ENCODE measurements at regions of chr4 and their contacts with region 1.

Region 1: GRCh38 chr4:140595065-140595464 is 26.3 kb upstream of the UCP1 start:
- DNase-seq: peak; percentile 33
- H3K4me3 ChIP-seq: no peak overlapping the region
- H3K27ac ChIP-seq: no peak overlapping the region
- H3K4me1 ChIP-seq: no peaks in the 10 kb centered on the region
- H3K27me3 ChIP-seq: no peaks in the 10 kb centered on the region
- CTCF ChIP-seq: peak; percentile 45

Region 2: DNA sequence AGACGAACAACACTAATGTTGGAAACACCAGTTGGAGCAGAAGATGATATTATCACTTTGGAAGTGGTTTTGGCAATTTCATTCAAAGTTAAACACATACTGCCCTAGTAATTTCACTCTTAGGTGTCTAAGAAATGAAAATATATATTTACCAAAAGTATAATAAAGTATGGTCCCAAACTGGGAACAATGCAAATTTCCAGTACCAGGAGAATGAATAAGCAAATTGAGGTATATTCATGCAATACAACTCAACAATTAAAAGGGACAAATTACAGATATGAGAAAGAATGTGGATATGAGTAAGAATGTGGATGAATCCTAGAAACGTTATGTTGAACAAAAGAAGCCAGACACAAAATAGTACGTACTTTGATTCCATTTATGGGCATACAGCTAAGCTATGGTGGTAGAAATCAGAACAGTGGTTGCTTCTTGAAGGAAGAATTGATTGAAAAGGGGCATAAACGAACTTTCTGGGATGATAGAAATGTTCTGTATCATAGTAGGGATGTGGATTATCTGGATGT is 61.0 kb before region 1 on chr4:
- intact Hi-C with region 1: no loop called
- DNase-seq: no peak
- H3K4me3 ChIP-seq: no peak overlapping the region
- H3K27ac ChIP-seq: no peak overlapping the region
- H3K4me1 ChIP-seq: no peaks in the 10 kb centered on the region
- H3K27me3 ChIP-seq: no peaks in the 10 kb centered on the region
- CTCF ChIP-seq: no peak

Region 3: GRCh38 chr4:140637836-140638235 is 42.8 kb after region 1 on chr4:
- intact Hi-C with region 1: loop called (anchors 5 kb)
- DNase-seq: peak; percentile 48
- H3K4me3 ChIP-seq: no peak overlapping the region
- H3K27ac ChIP-seq: no peak overlapping the region
- H3K4me1 ChIP-seq: no peaks in the 10 kb centered on the region
- H3K27me3 ChIP-seq: no peaks in the 10 kb centered on the region
- CTCF ChIP-seq: peak; percentile 57

Region 4: DNA sequence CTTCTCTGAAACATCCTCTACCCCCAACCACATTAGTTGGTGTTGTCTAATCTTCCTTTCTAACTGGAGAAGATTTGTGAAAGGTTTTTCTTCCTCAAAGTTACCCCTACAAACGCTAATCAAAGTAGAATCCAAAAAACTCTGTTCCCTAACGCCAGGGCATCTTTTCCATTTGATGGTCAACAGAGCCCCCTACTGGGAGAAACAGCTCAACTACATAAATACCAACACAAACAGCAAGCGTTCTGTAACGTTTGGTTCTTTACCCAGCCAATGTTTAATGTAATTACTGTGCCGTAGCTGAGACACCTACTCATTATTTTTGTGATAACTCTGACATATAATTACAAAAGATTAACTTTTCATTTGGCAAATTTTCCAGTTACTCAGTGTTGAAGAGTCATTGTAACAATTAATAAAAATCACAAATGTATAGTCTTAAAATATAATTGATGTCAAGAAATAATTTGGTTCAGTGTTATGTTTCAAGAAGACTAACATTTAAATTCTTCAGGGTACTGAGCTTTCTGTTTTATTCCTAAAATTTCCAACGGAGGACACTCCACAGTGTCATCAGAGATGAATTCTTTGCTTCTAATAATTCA is 256.1 kb after region 1 on chr4:
- intact Hi-C with region 1: loop called (anchors 5 kb)
- DNase-seq: peak; percentile 65
- H3K4me3 ChIP-seq: no peak overlapping the region
- H3K27ac ChIP-seq: no peak overlapping the region
- H3K4me1 ChIP-seq: no peaks in the 10 kb centered on the region
- H3K27me3 ChIP-seq: no peaks in the 10 kb centered on the region
- CTCF ChIP-seq: peak; percentile 67

Region 5: GRCh38 chr4:141153751-141154510 is 558.9 kb after region 1 on chr4:
- intact Hi-C with region 1: no loop called
- DNase-seq: no peak
- H3K4me3 ChIP-seq: no peak overlapping the region
- H3K27ac ChIP-seq: no peak overlapping the region
- H3K4me1 ChIP-seq: no peaks in the 10 kb centered on the region
- H3K27me3 ChIP-seq: no peaks in the 10 kb centered on the region
- CTCF ChIP-seq: no peak